PC-9 (cell line): ENCODE measurements at regions of chr1 and their contacts with region 1.

Region 1: GRCh38 chr1:215215846-215216245 is 133.3 kb downstream of the KCNK2 start:
- DNase-seq: no peak
- H3K4me3 ChIP-seq: no peak overlapping the region
- H3K27ac ChIP-seq: no peak overlapping the region
- H3K4me1 ChIP-seq: no peaks in the 10 kb centered on the region
- H3K27me3 ChIP-seq: no peaks in the 10 kb centered on the region
- CTCF ChIP-seq: no peak

Region 2: DNA sequence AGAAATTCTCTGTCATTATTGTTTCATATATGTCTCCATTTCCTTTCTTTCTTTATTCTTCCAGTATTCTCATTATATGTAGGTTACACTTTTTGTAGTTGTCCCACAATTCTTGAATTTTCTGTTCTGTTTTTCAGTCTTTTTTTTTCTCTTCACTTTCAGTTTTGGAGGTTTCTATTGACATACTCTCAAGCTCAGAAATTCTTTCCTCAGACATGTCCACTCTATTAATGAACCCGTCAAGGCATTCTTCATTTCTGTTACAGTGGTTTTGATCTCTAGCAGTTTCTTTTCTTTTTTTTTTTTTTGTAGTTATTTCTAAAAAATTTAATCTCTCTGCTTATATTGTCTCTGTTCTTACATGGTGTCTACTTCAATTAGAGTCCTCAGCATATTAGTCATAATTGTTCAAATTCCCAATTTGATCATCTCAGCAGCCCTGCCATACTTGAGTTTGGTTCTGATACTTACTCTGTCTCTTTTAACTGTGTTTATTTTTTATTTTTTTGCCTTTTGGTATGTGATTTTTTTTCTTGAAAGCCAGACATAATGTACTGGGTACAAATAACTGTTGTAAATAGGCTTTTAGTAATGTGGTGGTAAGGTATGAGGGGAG is 182.8 kb before region 1 on chr1:
- CTCF ChIA-PET with region 1: no interaction called
- POLR2A ChIA-PET with region 1: interaction called, 15 read pairs
- intact Hi-C with region 1: no loop called
- DNase-seq: no peak
- H3K4me3 ChIP-seq: no peak overlapping the region
- H3K27ac ChIP-seq: no peak overlapping the region
- H3K4me1 ChIP-seq: no peaks in the 10 kb centered on the region
- H3K27me3 ChIP-seq: no peaks in the 10 kb centered on the region
- CTCF ChIP-seq: no peak

Region 3: GRCh38 chr1:215243345-215244054 is 27.7 kb after region 1 on chr1:
- CTCF ChIA-PET with region 1: no interaction called
- POLR2A ChIA-PET with region 1: no interaction called
- intact Hi-C with region 1: no loop called
- DNase-seq: no peak
- H3K4me3 ChIP-seq: no peak overlapping the region
- H3K27ac ChIP-seq: no peak overlapping the region
- H3K4me1 ChIP-seq: 0 out of 2 replicates have a peak, but pooled peaks cover 6% of the 10 kb centered on the region
- H3K27me3 ChIP-seq: no peaks in the 10 kb centered on the region
- CTCF ChIP-seq: no peak

Region 4: GRCh38 chr1:215847859-215848258 is 632.0 kb after region 1 on chr1:
- CTCF ChIA-PET with region 1: no interaction called
- POLR2A ChIA-PET with region 1: no interaction called
- intact Hi-C with region 1: no loop called
- DNase-seq: no peak
- H3K4me3 ChIP-seq: no peak overlapping the region
- H3K27ac ChIP-seq: no peak overlapping the region
- H3K4me1 ChIP-seq: peaks cover 18% of the 10 kb centered on the region
- H3K27me3 ChIP-seq: no peaks in the 10 kb centered on the region
- CTCF ChIP-seq: no peak